ENCODE measurements at regions of chr6 and their contacts with region 1.

Region 1: DNA sequence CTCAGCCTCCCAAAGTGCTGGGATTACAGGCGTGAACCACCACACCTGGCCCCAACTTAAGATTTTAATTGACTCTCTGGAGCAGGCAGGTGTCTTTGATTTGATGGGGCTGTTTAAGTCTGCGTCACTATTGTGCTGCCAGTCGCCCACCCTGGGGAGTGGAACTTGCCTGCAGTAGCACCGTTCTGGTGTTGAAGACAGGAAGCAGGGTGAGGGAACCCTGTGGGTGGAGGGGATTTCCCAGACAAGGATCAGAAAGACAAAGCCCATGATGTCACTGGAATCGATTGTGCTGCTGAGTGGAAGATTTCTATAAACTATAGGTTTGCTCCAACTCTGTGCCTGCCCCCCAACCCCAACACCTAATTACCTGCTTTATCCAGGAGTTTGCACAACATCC is 11.0 kb downstream of the ALDH8A1 start:
- DNase-seq: no peak

Region 2: GRCh38 chr6:134174672-134175198 is 764.2 kb before region 1 on chr6:
- in situ Hi-C with region 1: loop called (anchors 25 kb)
- DNase-seq: peak; percentile 82

Region 3: GRCh38 chr6:135044639-135045038 is 105.7 kb after region 1 on chr6:
- in situ Hi-C with region 1: no loop called
- DNase-seq: no peak